Psoas muscle (tissue), 8 donors: ENCODE measurements at regions of chr14 and their contacts with region 1.

Region 1: GRCh38 chr14:66426451-66426850 is 59.7 kb upstream of the CCDC196 start:
- DNase-seq: no peak
- ATAC-seq: no peak
- H3K4me3 ChIP-seq: no peak overlapping the region
- H3K27ac ChIP-seq: no peak overlapping the region
- H3K4me1 ChIP-seq: peaks cover 7% of the 10 kb centered on the region
- H3K27me3 ChIP-seq: no peaks in the 10 kb centered on the region
- CTCF ChIP-seq: no peak

Region 2: DNA sequence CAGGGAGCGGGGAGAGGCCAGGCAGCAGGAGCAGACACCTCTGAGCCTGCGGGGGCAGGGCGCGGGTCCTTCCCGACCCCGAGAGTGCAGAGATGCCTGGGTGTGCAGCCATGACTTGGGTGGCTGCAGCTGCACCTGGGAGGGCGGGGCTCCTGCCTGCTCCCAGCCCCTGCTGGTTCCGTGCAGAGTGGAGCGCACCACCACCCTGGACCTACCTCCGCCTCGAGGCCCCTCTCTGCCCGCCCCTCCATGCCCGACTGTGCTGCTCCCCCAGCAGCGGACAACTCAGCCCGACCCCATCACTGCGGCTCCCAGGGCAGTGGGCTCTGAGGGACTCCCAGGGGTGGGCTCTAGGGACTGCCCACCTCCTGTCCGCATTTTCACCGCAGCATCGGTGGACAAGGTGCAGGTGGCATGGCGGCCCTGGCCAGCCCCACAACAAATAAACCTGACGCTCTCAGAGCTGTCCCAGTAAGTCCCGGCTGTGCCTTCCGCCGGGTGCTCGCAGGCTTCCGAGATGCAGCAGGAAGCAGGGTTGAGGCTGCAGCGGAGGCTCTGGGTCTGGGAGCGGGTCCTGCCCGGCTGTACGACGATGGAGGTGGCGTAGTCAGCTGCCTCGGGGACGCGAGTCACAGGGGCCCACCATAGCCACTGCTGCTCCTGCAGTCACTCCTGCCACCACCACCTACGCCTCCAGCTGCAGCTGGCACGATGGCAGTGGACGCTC is 332.3 kb before region 1 on chr14:
- intact Hi-C with region 1: no loop called
- DNase-seq: no peak
- ATAC-seq: no peak
- H3K4me3 ChIP-seq: no peak overlapping the region
- H3K27ac ChIP-seq: no peak overlapping the region
- H3K4me1 ChIP-seq: no peaks in the 10 kb centered on the region
- H3K27me3 ChIP-seq: no peaks in the 10 kb centered on the region
- CTCF ChIP-seq: no peak

Region 3: GRCh38 chr14:66311990-66312389 is 114.5 kb before region 1 on chr14:
- intact Hi-C with region 1: no loop called
- DNase-seq: no peak
- ATAC-seq: no peak
- H3K4me3 ChIP-seq: no peak overlapping the region
- H3K27ac ChIP-seq: no peak overlapping the region
- H3K4me1 ChIP-seq: no peaks in the 10 kb centered on the region
- H3K27me3 ChIP-seq: no peaks in the 10 kb centered on the region
- CTCF ChIP-seq: no peak

Region 4: GRCh38 chr14:66359500-66359899 is 67.0 kb before region 1 on chr14:
- intact Hi-C with region 1: no loop called
- DNase-seq: no peak
- ATAC-seq: peak in 1 of 4 donors; percentile 44
- H3K4me3 ChIP-seq: no peak overlapping the region
- H3K27ac ChIP-seq: no peak overlapping the region
- H3K4me1 ChIP-seq: no peaks in the 10 kb centered on the region
- H3K27me3 ChIP-seq: no peaks in the 10 kb centered on the region
- CTCF ChIP-seq: peak; percentile 71

Region 5: DNA sequence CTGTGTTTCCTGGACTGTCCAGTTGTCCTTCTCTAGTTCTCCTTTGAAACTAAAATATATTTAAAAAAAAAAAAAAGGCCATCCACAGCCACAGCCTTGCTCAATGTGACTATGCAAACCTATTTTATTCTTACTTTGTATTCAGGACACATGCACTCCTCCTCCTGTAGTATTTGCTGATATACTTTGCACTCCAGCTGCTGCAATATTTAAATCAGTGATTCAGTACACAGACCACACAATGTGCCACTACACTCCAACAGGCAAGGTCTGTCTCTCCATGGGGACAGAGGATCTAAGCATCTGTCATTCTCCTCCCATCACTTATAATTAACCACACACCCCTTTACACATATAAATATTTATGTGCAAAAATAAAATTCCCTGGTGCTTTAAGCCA is 19.5 kb after region 1 on chr14:
- intact Hi-C with region 1: loop called in 1 of 2 experiments (anchors 1 kb)
- DNase-seq: no peak
- ATAC-seq: no peak
- H3K4me3 ChIP-seq: no peak overlapping the region
- H3K27ac ChIP-seq: no peak overlapping the region
- H3K4me1 ChIP-seq: no peaks in the 10 kb centered on the region
- H3K27me3 ChIP-seq: no peaks in the 10 kb centered on the region
- CTCF ChIP-seq: no peak

Region 6: DNA sequence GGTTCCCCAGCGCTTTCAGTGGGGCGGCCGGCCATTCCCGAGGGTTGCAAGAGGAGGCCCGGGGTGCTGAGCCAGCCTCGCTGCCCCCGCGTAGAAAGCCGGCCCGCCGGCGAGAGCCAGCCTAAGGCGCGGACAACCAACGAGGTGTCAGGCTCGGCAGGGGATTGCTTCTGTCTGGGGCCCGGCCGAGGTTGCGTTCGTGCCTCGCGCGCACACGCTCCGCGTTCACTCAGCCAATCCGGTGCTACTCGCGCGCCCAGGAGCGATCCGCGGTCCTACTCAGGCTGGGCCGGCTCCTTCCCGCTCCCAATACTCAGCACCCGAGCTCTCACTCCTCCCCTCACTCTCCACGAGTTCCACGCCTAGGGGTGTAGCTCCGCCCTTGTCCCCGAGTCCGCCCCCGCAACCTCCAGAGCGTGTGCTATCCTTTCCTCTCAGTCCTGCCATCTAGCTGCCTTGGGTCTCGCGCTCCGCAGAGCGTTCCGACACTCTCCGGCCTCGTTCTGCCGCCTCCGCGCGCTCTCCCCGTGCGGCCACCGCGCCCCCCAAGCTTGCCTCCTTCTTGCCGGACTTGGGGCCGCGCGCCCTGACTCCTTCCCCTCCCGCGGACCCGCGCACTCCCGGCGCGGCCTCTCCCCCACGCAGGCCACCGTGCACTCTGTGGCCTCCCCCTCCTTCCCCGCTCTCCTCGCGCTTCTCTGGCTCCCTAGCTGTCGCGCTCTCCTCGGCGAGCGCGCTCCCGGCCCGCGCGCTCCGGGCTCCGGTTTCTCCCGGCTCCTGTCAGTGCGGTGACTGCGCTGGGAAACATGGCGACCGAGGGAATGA is 81.5 kb after region 1 on chr14 and contains the start of gene GPHN:
- intact Hi-C with region 1: no loop called
- DNase-seq: peak; percentile 97 to 98
- ATAC-seq: peak; percentile 93 to 97 (median 95)
- H3K4me3 ChIP-seq: peak within 1 kb of the TSS; percentile 91
- H3K27ac ChIP-seq: peak within 1 kb of the TSS; percentile 95
- H3K4me1 ChIP-seq: peaks cover 37% of the 10 kb centered on the region
- H3K27me3 ChIP-seq: no peaks in the 10 kb centered on the region
- CTCF ChIP-seq: peak; percentile 38
- total RNA-seq, gene GPHN: 22.3 to 39.7 (median 32.1) TPM